ENCODE measurements at regions of chr10 and their contacts with region 1.

Region 1: DNA sequence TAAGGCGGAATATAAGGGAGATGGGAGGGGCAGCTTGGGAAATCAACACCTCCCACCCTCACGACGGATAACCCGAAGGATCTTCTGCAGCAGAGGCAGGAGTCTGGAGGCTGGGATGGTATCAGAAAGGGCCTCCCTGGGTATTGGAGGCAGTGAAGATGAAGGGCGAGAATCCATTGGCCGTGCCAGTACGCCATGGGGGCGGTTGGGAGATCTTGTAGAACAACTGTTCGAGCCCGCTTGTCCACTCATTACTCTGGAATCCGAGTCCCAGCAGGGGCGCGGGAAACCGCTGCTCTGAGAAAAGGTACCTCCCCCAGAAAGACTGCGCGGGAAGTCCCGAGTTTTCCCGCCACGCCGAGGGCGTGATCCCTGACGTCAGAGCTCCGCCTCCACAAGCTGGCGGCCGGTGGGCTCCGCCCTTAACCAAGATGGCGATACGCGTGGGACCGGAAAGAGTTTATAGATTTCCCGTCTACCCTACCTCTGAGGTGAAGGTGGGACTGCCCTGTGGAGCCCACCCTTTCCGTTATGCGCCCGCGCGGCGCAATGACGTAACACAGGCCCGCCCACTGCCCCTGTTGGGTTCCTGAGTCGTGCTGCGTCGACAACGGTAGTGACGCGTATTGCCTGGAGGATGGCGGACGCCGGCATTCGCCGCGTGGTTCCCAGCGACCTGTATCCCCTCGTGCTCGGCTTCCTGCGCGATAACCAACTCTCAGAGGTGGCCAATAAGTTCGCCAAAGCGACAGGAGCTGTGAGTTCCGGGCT is at the start of gene NOLC1:
- DNase-seq: peak; percentile 100
- ATAC-seq: peak; percentile 97
- H3K4me3 ChIP-seq: peak within 1 kb of the TSS; percentile 22 to 99 (median 96)
- H3K4me3 Mint-ChIP-seq: peak within 1 kb of the TSS; percentile 95
- H3K27ac ChIP-seq: peak within 1 kb of the TSS; percentile 85 to 93
- H3K27ac Mint-ChIP-seq: peak within 1 kb of the TSS; percentile 95
- H3K4me1 ChIP-seq: peaks cover 15 to 24% of the 10 kb centered on the region in 2 donors
- H3K4me1 Mint-ChIP-seq: peaks cover 36% of the 10 kb centered on the region
- H3K27me3 ChIP-seq: no peaks in the 10 kb centered on the region
- H3K27me3 Mint-ChIP-seq: no peaks in the 10 kb centered on the region
- CTCF ChIP-seq: no peak
- total RNA-seq, gene NOLC1: 45.0 and 50.2 TPM in 2 replicates

Region 2: GRCh38 chr10:101818119-101818871 is 333.7 kb before region 1 on chr10 and contains the start of gene OGA:
- CTCF ChIA-PET with region 1: no interaction called
- POLR2A ChIA-PET with region 1: interaction called, 3 read pairs
- intact Hi-C with region 1: loop called (anchors 1 kb)
- DNase-seq: peak; percentile 98
- ATAC-seq: peak; percentile 87
- H3K4me3 ChIP-seq: peak within 1 kb of the TSS; percentile 56 to 97 (median 92)
- H3K4me3 Mint-ChIP-seq: peak within 1 kb of the TSS; percentile 94
- H3K27ac ChIP-seq: peak within 1 kb of the TSS; percentile 81 to 85
- H3K27ac Mint-ChIP-seq: peak within 1 kb of the TSS; percentile 99
- H3K4me1 ChIP-seq: peaks cover 27% of the 10 kb centered on the region in 2 donors
- H3K4me1 Mint-ChIP-seq: peaks cover 35% of the 10 kb centered on the region
- H3K27me3 ChIP-seq: no peaks in the 10 kb centered on the region
- H3K27me3 Mint-ChIP-seq: no peaks in the 10 kb centered on the region
- CTCF ChIP-seq: no peak
- total RNA-seq, gene OGA: 418 and 442 TPM in 2 replicates

Region 3: DNA sequence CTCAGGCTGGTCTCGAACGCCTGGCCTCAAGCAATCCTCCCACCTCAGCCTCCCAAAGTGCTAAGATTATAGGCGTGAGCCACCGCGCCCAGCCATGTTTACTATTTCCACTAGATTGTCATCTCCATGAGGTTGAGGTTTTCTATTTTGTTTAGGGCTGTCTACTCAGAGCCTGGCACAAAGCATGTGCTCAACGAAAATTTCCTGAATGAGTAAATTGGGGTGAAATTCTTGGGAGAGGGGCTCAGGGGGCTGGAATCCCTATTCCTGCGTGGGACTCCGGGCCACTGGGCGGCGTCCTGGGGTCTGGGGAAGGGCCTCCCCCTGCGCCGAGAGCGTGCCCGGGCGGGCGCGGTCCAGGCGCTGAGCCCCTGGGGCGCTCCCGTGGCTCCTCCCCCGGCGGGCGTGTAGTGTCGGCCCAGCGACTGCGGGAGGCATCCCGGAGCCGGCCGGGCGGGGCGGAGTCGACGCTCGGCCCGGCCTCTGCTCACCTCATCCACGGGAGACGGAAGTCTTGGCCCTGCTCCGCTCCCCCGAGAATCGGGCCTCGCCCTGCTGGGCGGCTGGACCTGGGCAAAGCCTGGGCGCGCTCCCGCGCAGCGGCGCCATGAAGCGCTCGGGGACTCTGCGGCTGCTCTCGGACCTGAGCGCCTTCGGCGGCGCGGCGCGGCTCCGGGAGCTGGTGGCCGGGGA is 86.9 kb before region 1 on chr10 and contains the start of gene HPS6:
- CTCF ChIA-PET with region 1: no interaction called
- POLR2A ChIA-PET with region 1: no interaction called
- intact Hi-C with region 1: loop called (anchors 1 kb)
- DNase-seq: peak; percentile 90
- ATAC-seq: peak; percentile 98
- H3K4me3 ChIP-seq: peak within 1 kb of the TSS; percentile 51 to 89 (median 73)
- H3K4me3 Mint-ChIP-seq: peak within 1 kb of the TSS; percentile 92
- H3K27ac ChIP-seq: peak within 1 kb of the TSS; percentile 63 to 90
- H3K27ac Mint-ChIP-seq: peak within 1 kb of the TSS; percentile 92
- H3K4me1 ChIP-seq: peaks cover 15 to 20% of the 10 kb centered on the region in 2 donors
- H3K4me1 Mint-ChIP-seq: peaks cover 23% of the 10 kb centered on the region
- H3K27me3 ChIP-seq: no peaks in the 10 kb centered on the region
- H3K27me3 Mint-ChIP-seq: no peaks in the 10 kb centered on the region
- CTCF ChIP-seq: no peak
- total RNA-seq, gene HPS6: 28.6 and 29.5 TPM in 2 replicates

Region 4: DNA sequence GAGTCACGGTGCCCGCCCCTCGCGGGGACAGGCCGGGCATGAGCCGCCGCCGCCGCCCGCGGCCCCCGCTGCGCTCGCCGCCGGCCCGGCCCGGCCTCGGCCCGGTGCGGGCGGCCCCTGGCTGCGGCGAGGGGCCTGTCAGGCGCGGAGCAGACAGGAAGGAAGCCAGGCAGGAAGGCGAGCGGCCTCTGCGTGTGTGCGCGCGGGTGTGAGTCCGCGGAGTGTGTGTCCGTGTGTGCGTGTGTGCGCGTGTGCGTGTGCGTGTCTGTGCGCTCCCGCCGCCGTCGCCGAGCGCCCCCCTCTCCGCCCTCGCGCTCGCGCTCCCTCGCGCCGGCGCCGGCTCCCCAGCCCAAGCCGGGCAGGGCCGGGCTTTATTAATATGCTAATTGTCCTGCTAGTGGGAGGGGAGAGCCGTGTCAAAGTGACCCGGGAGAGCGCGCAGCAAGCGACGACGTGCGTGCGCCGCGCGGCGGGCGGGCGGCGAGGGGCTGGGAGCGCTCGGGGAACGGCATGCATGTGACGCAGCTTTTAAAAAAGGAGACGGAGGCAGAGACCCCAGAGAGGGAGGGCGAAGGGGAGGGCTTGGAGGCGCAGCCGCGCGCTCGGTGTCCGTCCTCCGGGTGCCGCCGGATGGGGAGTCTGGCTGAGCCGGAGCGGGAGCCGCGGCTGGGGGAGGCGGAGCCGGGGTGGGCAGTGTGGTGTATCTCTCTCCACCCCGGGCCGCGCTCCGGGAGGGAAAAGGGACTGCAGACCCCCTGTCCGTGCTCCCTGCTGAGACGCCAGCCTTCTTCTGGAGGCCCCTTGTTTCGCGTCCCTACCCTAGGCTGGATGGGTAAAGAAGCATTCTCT is 31.6 kb before region 1 on chr10 and contains the start of gene LDB1:
- CTCF ChIA-PET with region 1: interaction called, 3 read pairs
- POLR2A ChIA-PET with region 1: interaction called, 6 read pairs
- intact Hi-C with region 1: loop called (anchors 1 kb)
- DNase-seq: peak; percentile 89
- ATAC-seq: peak; percentile 61
- H3K4me3 ChIP-seq: peak within 1 kb of the TSS; percentile 71 to 95 (median 90)
- H3K4me3 Mint-ChIP-seq: peak within 1 kb of the TSS; percentile 97
- H3K27ac ChIP-seq: peak within 1 kb of the TSS; percentile 87 to 94
- H3K27ac Mint-ChIP-seq: peak within 1 kb of the TSS; percentile 99
- H3K4me1 ChIP-seq: peaks cover 45 to 55% of the 10 kb centered on the region in 2 donors
- H3K4me1 Mint-ChIP-seq: peaks cover 55% of the 10 kb centered on the region
- H3K27me3 ChIP-seq: no peaks in the 10 kb centered on the region
- H3K27me3 Mint-ChIP-seq: no peaks in the 10 kb centered on the region
- CTCF ChIP-seq: no peak
- total RNA-seq, gene LDB1: 111 and 114 TPM in 2 replicates

Region 5: GRCh38 chr10:102245101-102245931 is 93.4 kb after region 1 on chr10 and contains the start of gene GBF1:
- CTCF ChIA-PET with region 1: no interaction called
- POLR2A ChIA-PET with region 1: no interaction called
- intact Hi-C with region 1: loop called (anchors 1 kb)
- DNase-seq: peak; percentile 98
- ATAC-seq: peak; percentile 86
- H3K4me3 ChIP-seq: peak within 1 kb of the TSS; percentile 80 to 99 (median 98)
- H3K4me3 Mint-ChIP-seq: peak within 1 kb of the TSS; percentile 94
- H3K27ac ChIP-seq: peak within 1 kb of the TSS; percentile 86 to 90
- H3K27ac Mint-ChIP-seq: peak within 1 kb of the TSS; percentile 38
- H3K4me1 ChIP-seq: peaks cover 50 to 51% of the 10 kb centered on the region in 2 donors
- H3K4me1 Mint-ChIP-seq: peaks cover 56% of the 10 kb centered on the region
- H3K27me3 ChIP-seq: peaks cover 0 to 31% (median 27%) of the 10 kb centered on the region in 4 experiments
- H3K27me3 Mint-ChIP-seq: peaks cover 23% of the 10 kb centered on the region
- CTCF ChIP-seq: no peak
- total RNA-seq, gene GBF1: 39.3 and 41.2 TPM in 2 replicates

Region 6: DNA sequence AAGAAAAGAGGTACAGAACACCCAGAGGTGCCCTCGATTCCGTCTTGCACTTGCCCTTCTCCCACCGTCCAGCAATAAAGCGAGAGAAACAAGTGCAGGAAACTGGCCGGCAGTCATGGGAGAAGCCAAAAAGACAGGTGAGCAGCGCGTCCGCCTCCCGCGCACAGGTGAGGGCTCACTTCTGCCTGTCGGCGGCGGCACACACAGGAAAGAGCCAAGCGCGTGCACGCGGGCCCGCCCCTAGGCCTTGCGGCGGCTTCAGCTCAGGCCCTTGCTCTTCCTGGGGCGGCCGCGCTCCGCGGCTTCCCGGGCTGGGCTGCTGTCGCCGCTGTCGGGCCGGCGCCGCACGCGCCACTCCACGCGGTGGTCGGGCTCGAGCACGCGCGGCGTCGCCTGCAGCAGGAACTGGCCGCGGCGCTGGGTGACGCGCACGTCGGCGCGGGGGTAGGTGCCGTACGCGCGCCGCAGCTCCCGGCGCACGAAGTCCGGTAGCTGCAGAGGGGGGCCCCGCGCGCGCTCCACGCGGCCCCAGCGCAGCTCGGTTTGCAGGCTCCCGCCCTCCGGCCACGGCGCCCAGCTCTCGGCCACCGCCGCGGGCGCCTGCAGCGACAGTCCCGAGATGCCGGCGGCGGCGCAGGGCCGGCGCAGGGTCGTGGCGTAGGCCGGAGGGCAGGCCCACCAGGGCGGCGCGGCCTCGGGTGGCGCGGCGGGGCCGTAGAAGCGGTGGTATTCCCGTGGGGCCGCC is 298.4 kb after region 1 on chr10:
- CTCF ChIA-PET with region 1: no interaction called
- POLR2A ChIA-PET with region 1: interaction called, 3 read pairs
- intact Hi-C with region 1: loop called (anchors 1 kb)
- DNase-seq: peak; percentile 96
- ATAC-seq: peak; percentile 79
- H3K4me3 ChIP-seq: peak overlapping the region; percentile 75 to 97 (median 87)
- H3K4me3 Mint-ChIP-seq: peak overlapping the region; percentile 97
- H3K27ac ChIP-seq: peak overlapping the region; percentile 81 to 86
- H3K27ac Mint-ChIP-seq: peak overlapping the region; percentile 97
- H3K4me1 ChIP-seq: peaks cover 12 to 15% of the 10 kb centered on the region in 2 donors
- H3K4me1 Mint-ChIP-seq: peaks cover 19% of the 10 kb centered on the region
- H3K27me3 ChIP-seq: no peaks in the 10 kb centered on the region
- H3K27me3 Mint-ChIP-seq: no peaks in the 10 kb centered on the region
- CTCF ChIP-seq: no peak

Region 7: GRCh38 chr10:103396064-103396788 is 1244.3 kb after region 1 on chr10 and contains the starts of genes ATP5MK and PDCD11:
- CTCF ChIA-PET with region 1: no interaction called
- POLR2A ChIA-PET with region 1: no interaction called
- intact Hi-C with region 1: loop called (anchors 2 kb)
- DNase-seq: peak; percentile 95
- ATAC-seq: peak; percentile 98
- H3K4me3 ChIP-seq: peak within 1 kb of the TSS; percentile 68 to 92 (median 76)
- H3K4me3 Mint-ChIP-seq: peak within 1 kb of the TSS; percentile 97
- H3K27ac ChIP-seq: peak within 1 kb of the TSS; percentile 38 to 64
- H3K27ac Mint-ChIP-seq: peak within 1 kb of the TSS; percentile 89
- H3K4me1 ChIP-seq: peaks cover 22 to 23% of the 10 kb centered on the region in 2 donors
- H3K4me1 Mint-ChIP-seq: peaks cover 44% of the 10 kb centered on the region
- H3K27me3 ChIP-seq: no peaks in the 10 kb centered on the region
- H3K27me3 Mint-ChIP-seq: no peaks in the 10 kb centered on the region
- CTCF ChIP-seq: no peak
- total RNA-seq, gene ATP5MK: 96.6 and 107 TPM in 2 replicates
- total RNA-seq, gene PDCD11: 36.4 and 42.3 TPM in 2 replicates